ENCODE measurements at regions of chr6 and their contacts with region 1.

Region 1: DNA sequence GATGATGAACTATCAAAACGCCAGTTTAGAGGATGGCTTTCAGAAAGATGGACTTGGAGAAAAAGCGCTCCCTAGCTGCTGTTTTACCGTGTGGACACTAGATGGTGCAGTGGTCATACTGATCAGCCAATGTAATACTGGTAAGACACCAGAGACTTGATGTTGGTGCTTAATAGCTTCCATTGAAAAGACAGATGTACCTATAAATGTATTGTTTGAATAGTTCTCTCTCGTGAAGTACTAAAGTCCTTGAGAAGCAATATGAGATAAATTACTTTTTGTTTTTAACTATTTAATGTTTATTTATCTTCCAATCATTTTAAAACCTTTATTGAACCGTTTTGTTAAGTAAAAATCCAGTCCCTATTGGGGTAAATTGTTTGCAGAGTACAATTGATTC is 63.9 kb upstream of the FUCA2 start:
- DNase-seq: peak; percentile 54
- H3K4me3 Mint-ChIP-seq: no peak overlapping the region
- H3K27ac Mint-ChIP-seq: no peak overlapping the region
- H3K4me1 Mint-ChIP-seq: no peaks in the 10 kb centered on the region
- H3K27me3 Mint-ChIP-seq: no peaks in the 10 kb centered on the region

Region 2: DNA sequence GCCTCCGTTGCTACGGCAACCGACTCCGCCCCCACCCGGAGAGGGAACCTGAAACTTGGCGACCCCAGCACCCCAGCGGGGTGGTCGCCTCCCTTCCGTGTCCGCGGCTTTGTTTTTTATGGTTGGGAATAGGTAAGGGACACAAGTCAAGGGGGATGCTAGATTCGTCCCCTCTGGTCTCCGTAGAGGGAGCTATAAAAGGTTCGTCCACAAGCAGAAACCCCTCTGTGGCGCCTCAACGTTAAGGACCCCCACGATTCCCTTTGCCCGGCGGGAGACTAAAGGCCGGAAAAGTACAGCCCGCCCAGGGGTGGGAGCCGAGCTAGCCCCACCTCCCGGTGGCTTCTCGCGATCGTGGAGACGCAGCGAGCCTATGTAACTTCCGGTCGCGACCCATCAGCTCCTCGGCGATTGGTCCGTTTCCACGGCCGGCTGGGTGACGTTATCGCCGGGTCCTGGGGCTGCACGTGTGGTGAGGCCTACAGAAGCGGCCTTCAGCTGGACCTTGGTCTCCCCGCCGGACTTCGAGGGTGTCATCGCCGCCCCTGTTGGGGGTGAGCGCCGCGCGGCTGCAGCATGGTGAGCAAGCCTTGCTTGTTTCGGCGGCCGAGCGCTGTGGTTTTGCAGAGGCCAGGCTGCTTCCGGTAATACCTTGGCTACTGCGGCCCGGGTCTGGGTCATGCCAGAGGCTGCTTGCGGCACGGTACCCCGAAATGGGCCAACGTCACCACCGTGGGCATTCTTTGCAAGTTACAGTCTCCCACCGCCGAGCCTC is 267.6 kb after region 1 on chr6 and contains the start of gene LTV1:
- CTCF ChIA-PET with region 1: interaction called, 16 read pairs
- DNase-seq: peak; percentile 95
- H3K4me3 Mint-ChIP-seq: peak within 1 kb of the TSS; percentile 89
- H3K27ac Mint-ChIP-seq: peak within 1 kb of the TSS; percentile 94
- H3K4me1 Mint-ChIP-seq: peaks cover 27% of the 10 kb centered on the region
- H3K27me3 Mint-ChIP-seq: no peaks in the 10 kb centered on the region

Region 3: GRCh38 chr6:144013486-144013909 is 438.1 kb after region 1 on chr6:
- CTCF ChIA-PET with region 1: interaction called, 58 read pairs
- DNase-seq: peak; percentile 73
- H3K4me3 Mint-ChIP-seq: no peak overlapping the region
- H3K27ac Mint-ChIP-seq: no peak overlapping the region
- H3K4me1 Mint-ChIP-seq: peaks cover 2% of the 10 kb centered on the region
- H3K27me3 Mint-ChIP-seq: peaks cover 38% of the 10 kb centered on the region

Region 4: DNA sequence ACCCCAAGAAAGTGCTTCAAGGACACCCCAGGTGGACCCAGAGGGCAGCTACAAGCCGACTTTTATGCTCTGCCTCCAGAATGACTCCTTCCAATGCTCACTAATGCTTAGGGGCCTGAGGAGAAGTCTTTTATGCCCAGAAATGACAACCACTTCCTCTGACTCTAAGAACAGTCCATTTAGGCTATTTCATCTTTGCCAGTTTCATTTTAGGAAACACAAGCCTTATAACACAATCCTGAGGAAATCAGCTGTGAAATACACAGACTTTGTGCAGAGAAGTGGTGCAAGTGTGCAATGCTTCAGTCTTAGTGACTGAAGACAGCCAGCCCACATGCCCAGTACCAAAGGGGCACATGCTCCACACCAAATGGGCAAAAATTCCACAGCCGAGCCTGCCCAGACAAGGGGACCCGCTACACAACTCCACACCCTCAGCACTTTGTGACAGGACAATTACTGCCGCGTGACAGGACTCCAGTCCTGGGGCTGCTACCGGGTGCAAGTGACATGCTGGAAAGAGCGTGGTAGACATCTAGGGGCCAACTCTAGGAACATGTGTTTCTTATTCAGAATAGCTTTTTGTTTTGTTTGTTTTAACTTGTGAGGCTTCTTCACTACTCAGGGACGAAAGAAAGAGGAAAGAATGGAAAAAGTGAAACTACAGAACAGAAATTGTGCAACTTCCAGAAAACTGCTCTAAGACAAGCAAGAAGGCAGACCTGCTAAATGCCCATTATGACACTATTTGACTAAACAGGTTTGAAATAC is 460.8 kb after region 1 on chr6:
- CTCF ChIA-PET with region 1: interaction called, 12 read pairs
- DNase-seq: peak; percentile 52
- H3K4me3 Mint-ChIP-seq: peak overlapping the region; percentile 0
- H3K27ac Mint-ChIP-seq: no peak overlapping the region
- H3K4me1 Mint-ChIP-seq: peaks cover 16% of the 10 kb centered on the region
- H3K27me3 Mint-ChIP-seq: no peaks in the 10 kb centered on the region